ENCODE measurements at regions of chr16 and their contacts with region 1.

Region 1: DNA sequence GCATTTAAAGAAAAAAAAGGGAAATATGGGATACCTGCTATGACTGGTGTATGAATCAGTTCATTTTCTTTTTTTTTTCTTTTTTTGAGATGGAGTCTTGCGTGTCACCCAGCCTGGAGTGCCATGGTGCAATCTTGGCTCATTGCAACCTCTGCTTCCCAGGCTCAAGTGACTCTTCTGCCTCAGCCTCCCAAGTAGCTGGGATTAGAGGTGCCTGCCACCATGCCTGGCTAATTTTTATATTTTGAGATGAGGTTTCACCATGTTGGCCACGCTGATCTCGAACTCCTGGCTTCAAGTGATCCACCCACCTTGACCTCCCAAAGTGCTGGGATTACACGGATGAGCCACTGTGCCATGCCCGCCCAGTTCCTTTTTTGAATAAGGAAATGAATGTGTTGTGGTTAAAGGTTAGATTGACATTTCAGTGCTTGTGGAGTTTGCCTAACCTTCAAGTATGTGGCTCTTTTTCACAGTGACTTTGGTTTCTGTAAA is 7.7 kb downstream of the HAPSTR1 start:
- DNase-seq: peak in 1 of 2 donors; percentile 36
- ATAC-seq: peak; percentile 73

Region 2: DNA sequence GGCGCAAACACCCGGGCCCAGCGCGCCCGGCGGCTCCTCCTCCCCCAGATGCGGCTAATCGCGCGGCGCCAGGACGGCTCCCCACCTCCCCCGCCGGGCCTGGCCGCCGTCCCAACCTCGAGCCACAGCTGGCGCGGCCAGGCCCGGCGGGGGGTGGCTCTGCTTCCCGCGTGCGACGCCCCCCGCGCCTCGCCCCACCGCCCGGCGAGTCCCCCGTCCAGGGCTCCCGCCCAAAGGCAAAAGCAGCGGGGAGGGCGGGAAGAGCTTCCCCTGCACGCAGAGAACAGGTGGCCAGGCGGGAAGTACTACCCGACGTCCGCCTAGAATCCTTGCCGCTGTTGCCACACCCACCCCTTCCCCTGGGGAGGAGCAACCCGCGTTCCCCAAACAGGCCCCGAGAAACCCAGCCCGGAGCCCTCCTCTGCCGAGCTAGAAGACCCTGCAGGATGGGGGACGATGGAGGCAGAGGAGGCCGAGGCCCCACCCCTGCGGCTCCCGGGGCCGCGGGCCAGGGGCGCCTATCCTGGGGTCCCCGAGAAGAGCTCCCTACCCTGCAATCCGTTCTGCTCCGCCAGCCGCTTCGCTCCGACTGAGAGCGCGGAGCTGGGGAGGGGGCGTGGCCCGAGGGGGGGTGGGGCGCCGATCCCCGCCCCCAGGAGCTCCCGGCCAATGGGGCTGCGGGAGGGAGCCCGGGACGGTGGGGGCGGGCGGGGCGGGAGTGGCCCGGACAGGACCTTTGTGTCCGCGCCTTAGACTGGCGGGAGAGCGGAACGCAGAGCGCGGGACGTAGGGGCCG is 230.6 kb before region 1 on chr16 and contains the start of gene CARHSP1:
- intact Hi-C with region 1: loop called in 1 of 2 experiments (anchors 5 kb)
- DNase-seq: peak; percentile 88 to 89
- ATAC-seq: peak; percentile 81
- total RNA-seq, gene CARHSP1: 50.2 to 50.9 TPM

Region 3: GRCh38 chr16:9311303-9311954 is 212.3 kb after region 1 on chr16:
- intact Hi-C with region 1: no loop called
- DNase-seq: peak; percentile 45 to 63
- ATAC-seq: peak; percentile 29